ENCODE measurements at regions of chr2 and their contacts with region 1.

Region 1: DNA sequence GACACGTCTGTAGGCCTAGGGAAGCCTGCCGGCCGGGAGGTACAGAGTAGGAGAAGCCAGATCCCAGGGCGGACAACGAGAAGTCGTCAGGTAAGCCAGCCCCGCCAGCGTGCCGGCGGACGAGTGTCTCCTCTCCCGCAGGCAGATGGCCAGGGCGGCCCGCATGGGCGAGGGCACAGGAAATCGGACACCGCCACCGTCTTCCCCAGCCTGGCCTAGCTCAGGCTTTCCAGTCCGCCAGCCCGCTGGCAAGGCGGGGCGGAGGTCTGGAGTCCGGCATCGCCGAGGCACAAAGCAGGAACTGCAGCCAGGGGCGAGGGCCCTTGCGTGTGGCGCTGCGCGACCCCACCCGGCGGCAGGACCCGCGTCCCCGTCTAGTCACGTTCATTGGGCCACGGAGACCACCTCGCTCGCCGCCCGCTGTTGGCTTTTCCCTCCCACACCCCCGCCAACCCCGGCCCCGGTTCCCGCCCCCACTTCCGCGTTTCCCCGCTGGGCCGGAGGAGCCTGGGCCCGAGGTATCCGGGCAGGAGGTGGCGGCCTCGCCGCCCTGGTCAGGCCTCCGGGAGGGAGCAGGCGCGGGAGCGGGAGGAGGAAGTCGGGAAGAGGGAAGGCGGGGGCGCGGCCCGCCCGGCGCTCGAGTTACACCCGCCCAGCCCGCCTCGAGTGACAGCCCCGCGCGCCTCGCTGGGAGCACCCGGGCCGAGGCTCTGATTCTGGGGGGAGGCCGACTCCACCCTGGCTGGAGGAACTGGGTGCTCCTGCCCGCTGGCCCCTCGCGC is at the start of gene GPD2:
- DNase-seq: peak; percentile 37 to 71 (median 58)
- ATAC-seq: peak; percentile 74
- H3K4me3 ChIP-seq: peak within 1 kb of the TSS; percentile 72
- H3K4me3 Mint-ChIP-seq: peak within 1 kb of the TSS; percentile 87 to 100 (median 98)
- H3K27ac ChIP-seq: peak within 1 kb of the TSS; percentile 71
- H3K27ac Mint-ChIP-seq: peak within 1 kb of the TSS; percentile 93 to 98 (median 95)
- H3K4me1 ChIP-seq: peaks cover 16 to 18% of the 10 kb centered on the region in 2 donors
- H3K4me1 Mint-ChIP-seq: peaks cover 25 to 51% (median 38%) of the 10 kb centered on the region in 7 donors
- H3K27me3 ChIP-seq: no peaks in the 10 kb centered on the region
- H3K27me3 Mint-ChIP-seq: no peaks in the 10 kb centered on the region
- total RNA-seq, gene GPD2: 7.8 to 17.1 (median 11.6) TPM

Region 2: DNA sequence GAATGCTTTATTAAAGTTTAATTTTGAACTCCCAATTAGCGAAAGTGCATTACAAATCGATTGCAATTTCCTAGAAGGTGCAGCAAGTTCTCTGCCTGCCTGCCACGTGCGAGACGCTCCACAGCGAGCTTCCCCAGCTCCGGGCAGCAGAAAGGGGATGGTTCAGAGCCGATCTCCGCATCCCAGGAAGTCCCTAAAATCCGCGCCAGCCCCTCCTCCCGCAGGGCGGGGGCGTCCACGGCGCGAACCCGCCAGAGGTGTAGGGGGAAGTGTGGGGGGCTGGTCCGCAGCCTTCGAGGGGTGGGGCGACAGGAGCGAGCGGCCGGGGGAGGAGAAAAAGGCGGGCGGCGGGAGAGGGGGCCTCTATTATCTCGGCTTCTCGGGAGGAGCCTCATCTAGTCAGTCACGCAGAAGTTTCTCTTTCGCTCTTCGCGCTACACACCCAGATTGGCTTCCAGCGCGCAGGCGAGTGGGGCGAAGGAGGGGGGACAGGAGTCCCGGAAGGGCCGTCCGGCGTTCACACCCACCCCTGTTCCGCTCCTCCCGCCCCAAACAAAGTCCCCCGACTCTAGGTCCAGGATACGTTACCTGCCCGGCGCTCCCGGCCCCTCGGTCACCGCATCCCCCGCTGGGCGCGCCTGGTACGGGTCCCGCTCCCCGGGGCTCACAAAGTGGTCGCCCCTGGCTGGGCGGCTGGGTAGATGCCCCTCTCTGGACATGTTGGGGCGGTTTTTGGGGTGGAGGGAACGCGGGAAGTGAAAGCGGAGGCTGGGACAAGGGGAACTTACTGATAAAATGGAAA is 94.3 kb before region 1 on chr2:
- CTCF ChIA-PET with region 1: no interaction called
- POLR2A ChIA-PET with region 1: interaction called, 33 read pairs
- intact Hi-C with region 1: loop called in 1 of 2 experiments (anchors 1 kb)
- DNase-seq: peak; percentile 66 to 91 (median 85)
- ATAC-seq: peak; percentile 81
- H3K4me3 ChIP-seq: peak overlapping the region; percentile 67
- H3K4me3 Mint-ChIP-seq: peak overlapping the region; percentile 91 to 98 (median 96)
- H3K27ac ChIP-seq: peak overlapping the region; percentile 100
- H3K27ac Mint-ChIP-seq: peak overlapping the region; percentile 94 to 100 (median 99)
- H3K4me1 ChIP-seq: peaks cover 18 to 20% of the 10 kb centered on the region in 2 donors
- H3K4me1 Mint-ChIP-seq: peaks cover 6 to 51% (median 45%) of the 10 kb centered on the region in 7 donors
- H3K27me3 ChIP-seq: no peaks in the 10 kb centered on the region
- H3K27me3 Mint-ChIP-seq: no peaks in the 10 kb centered on the region

Region 3: DNA sequence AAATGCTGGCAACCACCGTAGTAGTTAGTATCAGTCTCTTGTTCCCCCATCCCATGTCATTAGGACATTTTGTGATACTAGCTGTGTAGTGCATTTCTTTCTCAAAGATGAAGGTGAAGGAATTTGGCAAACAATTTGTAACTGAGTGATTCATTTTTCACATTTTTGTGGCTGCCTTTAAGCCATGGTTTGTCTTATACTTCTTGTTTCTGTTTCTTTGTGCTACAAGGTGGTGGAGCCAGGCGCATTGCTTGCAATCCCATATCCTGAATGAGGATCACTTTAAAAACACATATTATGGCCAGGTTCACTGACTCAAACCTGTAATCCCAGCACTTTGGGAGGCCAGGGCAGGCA is 40.9 kb after region 1 on chr2:
- CTCF ChIA-PET with region 1: no interaction called
- POLR2A ChIA-PET with region 1: no interaction called
- intact Hi-C with region 1: loop called (anchors 2 to 5 kb)
- DNase-seq: no peak
- ATAC-seq: no peak
- H3K4me3 ChIP-seq: no peak overlapping the region
- H3K4me3 Mint-ChIP-seq: peak overlapping the region in 1 of 10 donors; percentile 58
- H3K27ac ChIP-seq: no peak overlapping the region
- H3K27ac Mint-ChIP-seq: peak overlapping the region in 2 of 9 donors; percentile 24 to 85
- H3K4me1 ChIP-seq: peaks cover 0 to 16% of the 10 kb centered on the region in 2 donors
- H3K4me1 Mint-ChIP-seq: peaks cover 0 to 40% (median 7%) of the 10 kb centered on the region in 7 donors
- H3K27me3 ChIP-seq: no peaks in the 10 kb centered on the region
- H3K27me3 Mint-ChIP-seq: no peaks in the 10 kb centered on the region

Measured in naive thymus-derived CD4-positive, alpha-beta T cell (primary cell).